HEK293 (cell line): ENCODE measurements at regions of chr10 and their contacts with region 1.

Region 1: DNA sequence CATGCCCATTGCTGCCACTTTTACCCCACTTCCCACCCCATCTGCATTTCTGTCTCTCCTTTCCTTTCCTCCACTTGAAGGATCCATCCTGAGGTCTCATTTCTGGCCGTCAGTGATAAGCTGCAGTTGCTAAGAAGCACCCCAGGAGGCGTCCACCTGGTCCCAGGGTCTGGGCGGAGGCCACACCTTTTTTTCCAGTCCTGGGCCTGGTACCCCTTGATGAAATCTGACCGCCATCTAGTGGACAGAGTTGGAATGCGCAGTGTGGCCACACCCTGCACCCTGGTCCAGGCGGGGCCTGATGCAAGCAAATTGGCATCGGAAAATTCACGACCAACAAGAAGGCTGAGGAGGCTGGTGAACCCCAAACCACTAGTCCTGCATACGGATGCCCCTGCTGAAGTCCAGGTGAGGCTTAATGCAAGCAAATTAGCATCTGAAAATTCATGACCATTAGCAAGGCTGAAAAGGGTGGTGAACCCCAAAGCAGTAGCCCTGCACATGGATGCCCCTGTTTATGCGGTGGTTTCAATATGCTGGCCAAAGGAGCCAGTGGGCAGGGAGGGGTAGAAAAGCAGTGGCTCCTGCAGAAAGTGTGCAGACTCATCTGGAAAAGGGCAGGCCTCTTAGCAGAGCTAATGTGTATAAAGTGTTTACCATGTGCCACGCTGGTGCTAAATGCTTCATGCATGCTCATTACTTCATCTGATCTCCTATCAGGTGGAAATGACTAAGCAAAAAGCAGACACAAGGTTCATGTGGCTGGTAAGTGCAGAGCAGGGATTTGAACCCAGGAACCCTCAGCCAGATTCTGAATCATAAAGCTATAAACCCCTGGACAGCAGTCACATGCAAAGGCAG is 43.2 kb downstream of the GPAM start:
- H3K4me3 ChIP-seq: no peak overlapping the region
- H3K27ac ChIP-seq: no peak overlapping the region
- H3K4me1 ChIP-seq: no peaks in the 10 kb centered on the region
- CTCF ChIP-seq: peak; percentile 84

Region 2: DNA sequence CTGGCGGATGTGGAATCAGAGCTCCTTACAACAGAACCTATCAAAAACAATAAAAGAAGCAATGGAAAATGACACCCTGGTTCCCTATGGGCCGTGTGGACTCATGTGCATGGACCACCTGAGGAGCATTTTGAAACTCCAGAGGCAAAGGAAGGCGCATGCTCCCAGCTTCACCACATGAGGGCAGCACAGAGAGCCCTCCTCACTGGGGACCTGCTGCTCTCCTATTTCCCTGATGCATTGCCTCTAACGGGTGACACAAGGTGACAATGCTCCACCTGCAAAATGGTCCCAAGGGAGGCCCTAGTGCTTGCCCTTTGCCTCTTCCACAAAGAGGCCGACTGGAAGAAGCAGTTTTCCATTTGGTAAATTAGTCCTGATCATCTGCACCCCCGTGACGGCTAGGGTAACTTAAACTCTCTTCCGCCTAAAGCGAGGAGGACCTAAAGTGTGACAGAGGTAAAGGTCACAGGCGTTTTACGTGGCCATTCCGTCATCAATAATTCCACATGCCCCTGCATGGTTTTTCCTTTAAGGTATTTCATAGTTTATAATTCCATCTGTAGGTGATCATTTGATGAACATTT is 24.4 kb before region 1 on chr10:
- CTCF ChIA-PET with region 1: interaction called, 60 read pairs
- POLR2A ChIA-PET with region 1: no interaction called
- H3K4me3 ChIP-seq: no peak overlapping the region
- H3K27ac ChIP-seq: no peak overlapping the region
- H3K4me1 ChIP-seq: no peaks in the 10 kb centered on the region
- CTCF ChIP-seq: peak; percentile 57

Region 3: GRCh38 chr10:112151524-112152039 is 11.2 kb after region 1 on chr10:
- CTCF ChIA-PET with region 1: interaction called, 16 read pairs
- POLR2A ChIA-PET with region 1: no interaction called
- H3K4me3 ChIP-seq: no peak overlapping the region
- H3K27ac ChIP-seq: no peak overlapping the region
- H3K4me1 ChIP-seq: no peaks in the 10 kb centered on the region
- CTCF ChIP-seq: no peak

Region 4: DNA sequence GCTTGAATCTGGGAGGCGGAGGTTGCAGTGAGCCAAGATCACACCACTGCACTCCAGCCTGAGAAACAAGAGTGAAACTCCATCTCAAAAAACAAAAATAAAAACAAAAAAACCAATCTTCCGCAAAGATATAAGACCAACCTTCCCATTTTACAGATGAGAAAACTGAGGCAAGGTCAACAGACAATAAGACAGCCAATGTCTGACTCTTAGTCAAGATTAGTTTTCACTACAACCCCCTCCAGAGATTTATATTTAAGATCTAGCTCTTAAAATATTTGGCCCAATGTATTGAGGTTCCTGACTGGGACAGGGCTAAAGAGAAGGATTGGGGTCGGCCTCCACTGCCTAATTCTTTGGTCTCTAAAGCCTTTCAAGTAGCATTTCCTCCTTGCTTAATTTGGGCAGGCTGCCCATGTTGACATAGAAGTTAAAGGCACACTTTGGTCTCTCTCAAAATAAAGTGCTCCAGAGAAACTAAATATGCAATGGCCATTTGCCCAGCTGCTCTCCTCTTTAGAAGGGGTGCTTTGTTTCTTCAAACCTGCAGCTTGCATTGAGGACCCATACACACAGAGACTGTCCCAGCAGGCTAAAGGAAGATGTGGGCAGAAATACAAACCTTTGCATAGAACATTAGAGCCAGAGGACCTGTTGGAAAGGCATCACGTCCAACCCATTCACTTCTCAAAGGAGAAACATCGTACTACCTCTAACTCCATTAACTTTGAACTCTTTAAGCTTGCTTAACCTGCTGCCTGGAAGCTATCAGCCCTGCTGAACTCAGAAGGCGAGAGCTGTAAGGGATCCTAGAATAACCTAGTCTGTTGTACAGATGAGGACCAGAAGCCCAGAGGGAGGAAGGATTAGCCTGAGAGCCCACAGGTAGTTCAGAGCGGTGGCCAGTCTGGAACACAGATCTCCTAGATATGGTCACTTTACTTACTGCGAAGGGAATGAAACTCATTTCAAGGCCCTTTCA is 146.8 kb after region 1 on chr10:
- CTCF ChIA-PET with region 1: no interaction called
- POLR2A ChIA-PET with region 1: no interaction called
- H3K4me3 ChIP-seq: no peak overlapping the region
- H3K27ac ChIP-seq: no peak overlapping the region
- H3K4me1 ChIP-seq: no peaks in the 10 kb centered on the region
- CTCF ChIP-seq: no peak

Region 5: GRCh38 chr10:112314822-112315474 is 174.6 kb after region 1 on chr10:
- CTCF ChIA-PET with region 1: interaction called, 36 read pairs
- POLR2A ChIA-PET with region 1: no interaction called
- H3K4me3 ChIP-seq: no peak overlapping the region
- H3K27ac ChIP-seq: no peak overlapping the region
- H3K4me1 ChIP-seq: no peaks in the 10 kb centered on the region
- CTCF ChIP-seq: peak; percentile 71; the same call in 1 of the 2 replicates